Activated CD4-positive, alpha-beta memory T cell treated with anti-CD3 and anti-CD28 coated beads for 36 hours (primary cell): ENCODE measurements at regions of chr21 and their contacts with region 1.

Region 1: GRCh38 chr21:34202553-34203372 is 129.4 kb downstream of the MRPS6 start:
- DNase-seq: no peak
- H3K4me3 Mint-ChIP-seq: no peak overlapping the region
- H3K27ac Mint-ChIP-seq: no peak overlapping the region
- H3K4me1 Mint-ChIP-seq: peaks cover 25% of the 10 kb centered on the region
- H3K27me3 Mint-ChIP-seq: peaks cover 3% of the 10 kb centered on the region

Region 2: DNA sequence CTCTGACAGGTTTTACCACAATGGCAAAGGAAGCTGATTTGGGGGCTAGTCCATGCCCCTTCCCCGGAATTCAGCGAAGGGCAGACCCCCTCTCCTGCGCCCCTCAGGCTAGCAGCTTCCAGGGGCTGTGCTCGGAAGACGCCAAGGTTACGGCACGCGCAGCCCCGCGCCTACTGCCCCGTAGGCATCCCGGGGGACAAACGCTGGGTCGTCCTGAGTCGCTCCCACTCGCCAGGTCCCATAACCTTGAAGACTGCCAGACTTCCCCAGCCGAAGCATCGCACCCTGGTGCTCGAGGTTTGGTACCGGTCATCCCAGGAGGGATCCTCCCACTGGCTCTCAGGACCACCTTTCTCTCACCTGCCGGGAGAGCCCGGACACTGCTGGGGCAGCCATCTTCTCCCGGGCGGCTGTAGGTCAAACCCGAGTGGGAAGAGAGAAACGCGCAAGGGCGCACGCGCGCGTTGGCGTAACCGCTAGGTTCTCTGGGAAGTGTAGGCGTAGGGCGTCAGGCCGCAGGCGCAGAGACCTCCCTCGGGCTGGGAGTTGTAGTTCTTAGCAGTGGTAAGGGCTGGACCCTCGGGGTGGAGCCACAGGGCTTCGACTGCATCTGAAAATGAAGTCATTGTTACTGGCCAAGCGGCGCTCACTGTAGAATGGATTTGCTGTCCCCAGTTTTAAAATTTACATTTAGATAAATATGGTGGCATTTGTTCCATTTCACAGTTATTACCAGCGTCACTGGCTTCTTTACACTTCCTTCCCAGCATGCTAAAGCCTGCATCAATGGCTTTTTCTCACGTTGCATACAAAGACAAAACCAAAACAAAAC is 287.2 kb before region 1 on chr21 and contains the start of gene ATP5PO:
- CTCF ChIA-PET with region 1: no interaction called
- POLR2A ChIA-PET with region 1: no interaction called
- intact Hi-C with region 1: loop called (anchors 5 kb)
- DNase-seq: peak; percentile 98
- H3K4me3 Mint-ChIP-seq: peak within 1 kb of the TSS; percentile 99
- H3K27ac Mint-ChIP-seq: peak within 1 kb of the TSS; percentile 93
- H3K4me1 Mint-ChIP-seq: peaks cover 28% of the 10 kb centered on the region
- H3K27me3 Mint-ChIP-seq: no peaks in the 10 kb centered on the region
- total RNA-seq, gene ATP5PO: 208 to 210 TPM

Region 3: DNA sequence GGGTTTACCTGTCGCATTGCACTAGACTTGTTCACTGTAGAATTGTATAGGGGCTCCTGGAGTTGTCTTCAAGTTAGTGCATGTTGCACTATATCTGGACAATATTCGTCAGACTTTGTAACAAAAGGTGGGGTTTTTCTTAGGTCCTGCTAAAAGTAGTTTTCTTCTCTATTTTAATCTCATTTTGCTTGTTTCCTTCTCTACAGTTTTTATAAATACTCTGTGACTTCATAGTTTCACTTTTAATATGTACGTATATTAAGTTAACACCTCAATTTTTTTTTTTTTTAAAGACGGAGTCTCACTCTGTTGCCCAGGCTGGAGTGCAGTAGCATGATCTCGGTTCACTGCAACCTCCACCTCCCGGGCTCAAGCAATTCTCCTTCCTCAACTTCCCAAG is 155.8 kb before region 1 on chr21:
- CTCF ChIA-PET with region 1: no interaction called
- POLR2A ChIA-PET with region 1: no interaction called
- intact Hi-C with region 1: no loop called
- DNase-seq: no peak
- H3K4me3 Mint-ChIP-seq: no peak overlapping the region
- H3K27ac Mint-ChIP-seq: no peak overlapping the region
- H3K4me1 Mint-ChIP-seq: peaks cover 9% of the 10 kb centered on the region
- H3K27me3 Mint-ChIP-seq: peaks cover 2% of the 10 kb centered on the region

Region 4: GRCh38 chr21:34276711-34277425 is 74.1 kb after region 1 on chr21:
- CTCF ChIA-PET with region 1: no interaction called
- POLR2A ChIA-PET with region 1: no interaction called
- intact Hi-C with region 1: no loop called
- DNase-seq: peak; percentile 73
- H3K4me3 Mint-ChIP-seq: no peak overlapping the region
- H3K27ac Mint-ChIP-seq: peak overlapping the region; percentile 63
- H3K4me1 Mint-ChIP-seq: peaks cover 9% of the 10 kb centered on the region
- H3K27me3 Mint-ChIP-seq: peaks cover 14% of the 10 kb centered on the region